Endothelial cell of umbilical vein (primary cell): ENCODE measurements at regions of chr14 and their contacts with region 1.

Region 1: DNA sequence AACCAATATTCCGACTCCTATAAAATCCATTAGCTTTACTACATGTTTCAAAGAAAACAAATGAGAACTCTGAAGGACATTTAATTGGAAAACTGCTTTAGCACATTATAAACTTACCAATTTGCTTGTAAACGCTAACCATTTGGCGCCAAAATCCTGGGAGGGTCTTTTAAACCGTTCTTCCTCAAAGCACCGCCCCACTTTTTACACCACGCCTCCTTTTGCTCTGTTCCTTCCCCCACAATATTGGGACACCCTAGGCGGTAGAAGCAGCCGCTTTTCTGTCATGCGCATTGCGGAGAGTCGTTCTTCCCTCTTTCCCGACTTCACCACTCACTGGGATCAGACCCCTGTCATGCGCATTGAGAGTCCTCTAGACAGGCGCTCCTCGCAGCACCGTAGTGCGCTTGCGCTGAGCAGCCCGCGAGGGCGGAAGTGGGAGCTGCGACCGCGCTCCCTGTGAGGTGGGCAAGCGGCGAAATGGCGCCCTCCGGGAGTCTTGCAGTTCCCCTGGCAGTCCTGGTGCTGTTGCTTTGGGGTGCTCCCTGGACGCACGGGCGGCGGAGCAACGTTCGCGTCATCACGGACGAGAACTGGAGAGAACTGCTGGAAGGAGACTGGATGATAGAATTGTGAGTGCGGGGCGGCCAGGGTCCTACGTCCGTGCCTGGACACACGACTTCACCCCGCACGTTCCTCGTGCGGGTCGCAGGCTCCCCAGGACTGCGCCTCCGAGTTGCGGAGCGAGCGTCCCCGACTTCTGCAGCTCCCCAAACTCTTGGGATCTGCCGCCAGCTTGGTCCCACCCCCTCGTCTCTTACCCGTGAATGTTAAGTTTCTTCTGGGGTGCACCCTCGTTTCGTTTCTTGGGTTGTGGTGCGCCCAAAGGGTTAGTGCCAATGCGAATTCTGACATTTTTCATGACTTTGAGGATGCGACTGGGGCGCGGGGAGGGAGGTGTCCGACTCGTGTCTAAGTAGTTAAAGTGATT is at the start of gene TMX1:
- DNase-seq: peak; percentile 99
- H3K4me3 ChIP-seq: peak within 1 kb of the TSS; percentile 75 to 100 (median 91)
- H3K27ac ChIP-seq: peak within 1 kb of the TSS; percentile 29
- H3K4me1 ChIP-seq: peaks cover 9% of the 10 kb centered on the region
- H3K27me3 ChIP-seq: peaks cover 0 to 3% of the 10 kb centered on the region in 2 experiments
- CTCF ChIP-seq: peak in 1 of 2 donors; percentile 19
- POLR2A ChIP-seq: peak; percentile 96
- total RNA-seq, gene TMX1: 41.9 and 42.4 TPM in 2 replicates

Region 2: GRCh38 chr14:51094901-51095853 is 144.9 kb before region 1 on chr14 and contains the start of gene TRIM9:
- CTCF ChIA-PET with region 1: interaction called, 3 read pairs
- POLR2A ChIA-PET with region 1: no interaction called
- dilution Hi-C with region 1: no loop called
- intact Hi-C with region 1: loop called (anchors 1 kb)
- DNase-seq: peak; percentile 89
- H3K4me3 ChIP-seq: peak within 1 kb of the TSS; percentile 4 to 48 (median 41)
- H3K27ac ChIP-seq: no peak within 1 kb of the TSS
- H3K4me1 ChIP-seq: peaks cover 10% of the 10 kb centered on the region
- H3K27me3 ChIP-seq: peaks cover 29 to 52% of the 10 kb centered on the region in 2 experiments
- CTCF ChIP-seq: no peak
- POLR2A ChIP-seq: no peak
- total RNA-seq, gene TRIM9: not detected in 2 replicates

Region 3: GRCh38 chr14:51657762-51658161 is 417.7 kb after region 1 on chr14:
- CTCF ChIA-PET with region 1: no interaction called
- POLR2A ChIA-PET with region 1: no interaction called
- dilution Hi-C with region 1: no loop called
- intact Hi-C with region 1: no loop called
- DNase-seq: no peak
- H3K4me3 ChIP-seq: no peak overlapping the region
- H3K27ac ChIP-seq: no peak overlapping the region
- H3K4me1 ChIP-seq: peaks cover 39% of the 10 kb centered on the region
- H3K27me3 ChIP-seq: no peaks in the 10 kb centered on the region
- CTCF ChIP-seq: no peak
- POLR2A ChIP-seq: no peak